ENCODE measurements at regions of chr19 and their contacts with region 1.

Region 1: GRCh38 chr19:21358768-21359451 is at the start of gene ZNF738:
- DNase-seq: peak; percentile 93 to 94 (median 93)
- ATAC-seq: peak; percentile 99 to 100 (median 100)
- H3K4me3 ChIP-seq: peak within 1 kb of the TSS; percentile 44 to 92 (median 74)
- H3K27ac ChIP-seq: peak within 1 kb of the TSS in 11 of 12 donors; percentile 65 to 84 (median 73)
- H3K4me1 ChIP-seq: peaks cover 0 to 9% (median 4%) of the 10 kb centered on the region in 12 donors
- H3K27me3 ChIP-seq: no peaks in the 10 kb centered on the region
- CTCF ChIP-seq: no peak
- POLR2A ChIP-seq: peak in 1 of 2 donors; percentile 45
- total RNA-seq, gene ZNF738: 2.0 to 6.0 (median 2.5) TPM

Region 2: DNA sequence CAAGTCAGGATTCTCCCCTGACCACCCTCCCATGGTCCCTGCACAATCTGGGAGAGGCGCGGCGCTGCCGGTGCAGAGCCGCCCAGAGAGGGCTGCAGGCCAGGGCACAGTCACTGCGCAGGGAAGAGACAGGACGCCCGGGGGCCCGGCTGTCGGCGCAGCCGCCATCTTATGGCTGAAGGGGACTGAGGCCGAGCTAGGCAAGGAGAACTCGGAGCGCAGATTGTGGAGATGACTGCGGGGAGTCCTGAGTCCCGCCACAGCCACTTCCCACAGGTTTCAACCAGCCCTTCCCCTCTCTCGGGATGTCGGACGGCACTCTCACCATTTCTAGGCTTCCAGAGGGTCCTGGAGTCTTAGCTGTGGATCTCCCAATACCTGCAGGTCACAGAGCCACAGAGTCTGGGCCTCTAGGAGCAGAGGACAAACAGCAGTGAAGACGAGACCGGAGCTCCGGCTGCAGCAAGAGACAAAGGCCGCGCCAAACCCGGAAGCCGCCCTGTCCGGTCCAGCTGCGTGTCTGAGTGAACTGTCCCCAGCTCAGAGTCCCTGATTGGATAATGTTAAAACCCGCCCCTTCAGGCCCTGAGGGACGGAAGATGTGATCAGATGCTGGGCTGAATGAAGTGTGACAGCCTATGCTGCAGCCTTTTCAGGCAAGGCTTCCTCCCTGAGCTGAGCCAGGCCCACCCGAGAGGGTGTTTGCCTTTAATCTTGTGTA is 29.9 kb before region 1 on chr19 and contains the start of gene ZNF708:
- intact Hi-C with region 1: loop called in 2 of 10 experiments (anchors 1 to 2 kb)
- DNase-seq: peak; percentile 90 to 94 (median 93)
- ATAC-seq: peak; percentile 99 to 100 (median 100)
- H3K4me3 ChIP-seq: peak within 1 kb of the TSS; percentile 50 to 90 (median 75)
- H3K27ac ChIP-seq: peak within 1 kb of the TSS; percentile 81 to 98 (median 93)
- H3K4me1 ChIP-seq: peaks cover 0 to 23% (median 12%) of the 10 kb centered on the region in 12 donors
- H3K27me3 ChIP-seq: no peaks in the 10 kb centered on the region
- CTCF ChIP-seq: no peak
- POLR2A ChIP-seq: peak in 1 of 2 donors; percentile 78
- total RNA-seq, gene ZNF708: 3.1 to 8.7 (median 4.5) TPM

Region 3: GRCh38 chr19:21505459-21506451 is 146.8 kb after region 1 on chr19 and contains the start of gene ZNF429:
- intact Hi-C with region 1: no loop called
- DNase-seq: peak; percentile 92 to 96 (median 93)
- ATAC-seq: peak; percentile 98 to 100 (median 100)
- H3K4me3 ChIP-seq: peak within 1 kb of the TSS; percentile 58 to 94 (median 86)
- H3K27ac ChIP-seq: peak within 1 kb of the TSS; percentile 89 to 98 (median 94)
- H3K4me1 ChIP-seq: peaks cover 0 to 38% (median 22%) of the 10 kb centered on the region in 12 donors
- H3K27me3 ChIP-seq: no peaks in the 10 kb centered on the region
- CTCF ChIP-seq: peak in 3 of 12 donors; percentile 5 to 31 (median 19)
- POLR2A ChIP-seq: peak; percentile 46 to 63
- total RNA-seq, gene ZNF429: 4.6 to 10.1 (median 8.9) TPM